ENCODE measurements at regions of chr6 and their contacts with region 1.

Region 1: DNA sequence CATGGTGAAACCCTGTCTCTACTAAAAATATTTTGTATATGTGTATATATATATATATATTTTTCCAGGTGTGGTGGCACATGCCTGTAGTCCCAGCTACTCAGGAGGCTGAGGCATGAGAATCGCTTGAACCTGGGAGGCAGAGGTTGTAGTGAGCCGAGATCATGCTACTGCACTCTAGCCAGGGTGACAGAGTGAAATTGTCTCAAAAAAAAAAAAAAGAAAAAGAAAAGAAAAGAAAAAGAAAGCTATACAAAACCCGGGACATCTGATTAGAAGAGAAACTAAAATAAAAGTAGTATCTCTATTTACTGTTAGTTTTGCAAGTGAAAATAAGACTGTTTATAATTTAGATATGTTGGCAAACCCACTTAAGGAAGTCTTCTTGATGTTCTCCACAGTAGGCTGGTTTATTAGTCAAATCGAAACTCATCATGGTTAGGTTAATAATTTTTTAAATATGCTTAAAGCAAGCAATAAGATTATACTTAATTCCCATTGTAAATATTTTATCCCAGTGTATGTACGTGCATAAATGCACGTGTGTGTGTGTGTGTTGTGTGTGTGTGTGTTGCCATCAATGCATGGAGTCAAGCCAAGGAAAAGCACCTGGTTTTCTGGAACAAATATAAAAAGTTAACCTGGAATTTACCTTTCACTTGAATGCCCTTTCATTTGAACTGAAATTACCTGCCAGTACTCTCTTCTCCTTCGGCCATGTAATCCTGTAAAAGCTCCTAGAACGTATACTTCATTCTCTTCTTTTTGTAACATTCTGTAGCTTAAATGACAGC is 7.1 kb downstream of the VNN2 start:
- DNase-seq: no peak
- H3K4me3 Mint-ChIP-seq: no peak overlapping the region
- H3K27ac Mint-ChIP-seq: peak overlapping the region; percentile 25
- H3K4me1 Mint-ChIP-seq: peaks cover 23% of the 10 kb centered on the region
- H3K27me3 Mint-ChIP-seq: no peaks in the 10 kb centered on the region

Region 2: DNA sequence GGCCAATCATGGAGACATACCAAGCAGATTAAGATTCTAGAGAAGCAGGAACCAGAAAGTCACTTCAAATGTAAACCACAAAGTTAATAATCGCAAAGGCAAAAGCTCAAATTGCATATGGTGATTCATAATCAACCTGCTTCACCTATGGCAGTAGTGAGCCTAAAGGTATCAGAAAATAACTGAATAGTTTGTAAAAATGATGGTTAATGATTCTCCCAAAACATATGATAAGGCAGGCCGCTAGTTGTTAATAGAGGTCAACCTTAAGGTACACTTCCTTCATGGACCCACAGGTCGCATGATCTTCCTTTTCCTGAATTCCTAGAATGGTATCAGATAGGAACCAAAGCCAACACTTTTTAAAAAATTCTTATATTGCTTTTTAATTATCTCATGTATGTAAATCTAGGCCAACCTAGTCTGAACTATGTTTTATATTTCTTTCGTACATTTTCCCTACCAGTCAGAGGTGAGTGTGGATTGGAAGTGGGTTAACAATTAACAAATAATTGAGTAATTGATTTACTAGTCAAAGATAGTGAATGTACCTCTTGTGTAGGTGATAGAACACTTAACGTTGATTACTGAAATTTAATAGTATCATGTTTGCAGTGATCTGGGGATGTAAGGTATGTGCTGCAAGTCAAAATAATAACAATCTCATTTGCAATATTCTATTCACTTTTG is 143.0 kb before region 1 on chr6:
- CTCF ChIA-PET with region 1: no interaction called
- intact Hi-C with region 1: no loop called
- DNase-seq: no peak
- H3K4me3 Mint-ChIP-seq: no peak overlapping the region
- H3K27ac Mint-ChIP-seq: no peak overlapping the region
- H3K4me1 Mint-ChIP-seq: no peaks in the 10 kb centered on the region
- H3K27me3 Mint-ChIP-seq: peaks cover 3% of the 10 kb centered on the region

Region 3: GRCh38 chr6:132734694-132735635 is 15.7 kb before region 1 on chr6:
- CTCF ChIA-PET with region 1: no interaction called
- intact Hi-C with region 1: loop called (anchors 2 kb)
- DNase-seq: no peak
- H3K4me3 Mint-ChIP-seq: no peak overlapping the region
- H3K27ac Mint-ChIP-seq: no peak overlapping the region
- H3K4me1 Mint-ChIP-seq: peaks cover 27% of the 10 kb centered on the region
- H3K27me3 Mint-ChIP-seq: no peaks in the 10 kb centered on the region

Region 4: GRCh38 chr6:133392015-133392414 is 641.4 kb after region 1 on chr6:
- CTCF ChIA-PET with region 1: no interaction called
- intact Hi-C with region 1: no loop called
- DNase-seq: no peak
- H3K4me3 Mint-ChIP-seq: no peak overlapping the region
- H3K27ac Mint-ChIP-seq: no peak overlapping the region
- H3K4me1 Mint-ChIP-seq: no peaks in the 10 kb centered on the region
- H3K27me3 Mint-ChIP-seq: peaks cover 2% of the 10 kb centered on the region

Measured in activated naive CD4-positive, alpha-beta T cell treated with anti-CD3 and anti-CD28 coated beads for 36 hours (primary cell).